Posterior cingulate gyrus (tissue), 11 donors: ENCODE measurements at regions of chr7 and their contacts with region 1.

Region 1: GRCh38 chr7:150955519-150956394 is 22.4 kb downstream of the KCNH2 start:
- DNase-seq: peak in 2 of 10 donors; percentile 49 to 83

Region 2: GRCh38 chr7:150903606-150904005 is 52.2 kb before region 1 on chr7:
- intact Hi-C with region 1: loop called (anchors 10 kb)
- DNase-seq: peak in 9 of 10 donors; percentile 48 to 94 (median 64)

Region 3: DNA sequence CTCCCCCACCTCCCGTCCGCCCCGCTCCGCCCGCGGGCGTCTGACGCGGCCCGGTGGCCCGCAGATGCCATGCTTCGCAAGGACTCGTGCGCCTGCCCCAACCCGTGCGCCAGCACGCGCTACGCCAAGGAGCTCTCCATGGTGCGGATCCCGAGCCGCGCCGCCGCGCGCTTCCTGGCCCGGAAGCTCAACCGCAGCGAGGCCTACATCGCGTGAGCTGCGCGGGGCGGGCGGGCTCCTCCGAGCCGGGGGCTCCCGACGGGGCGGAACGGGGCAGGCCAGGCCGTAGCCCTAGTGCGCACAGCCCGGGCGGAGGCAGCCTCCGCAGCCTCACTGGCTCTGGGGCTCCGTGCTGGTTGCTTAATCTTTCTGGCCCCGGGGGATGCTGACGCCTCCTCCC is 95.4 kb after region 1 on chr7:
- intact Hi-C with region 1: no loop called
- DNase-seq: peak in 9 of 10 donors; percentile 31 to 95 (median 60)

Region 4: GRCh38 chr7:151068068-151068773 is 112.5 kb after region 1 on chr7:
- intact Hi-C with region 1: no loop called
- DNase-seq: no peak